ENCODE measurements at regions of chr17 and their contacts with region 1.

Region 1: GRCh38 chr17:81566461-81567126 is 14.4 kb upstream of the FAAP100 start:
- DNase-seq: no peak

Region 2: GRCh38 chr17:81553018-81553615 is 13.5 kb before region 1 on chr17:
- CTCF ChIA-PET with region 1: interaction called, 3 read pairs
- POLR2A ChIA-PET with region 1: interaction called, 28 read pairs
- DNase-seq: peak; percentile 79